Dorsolateral prefrontal cortex (tissue), 120 donors: ENCODE measurements at regions of chr11 and their contacts with region 1.

Region 1: GRCh38 chr11:10550503-10551289 is 9.7 kb upstream of the RNF141 start:
- DNase-seq: no peak
- H3K4me3 ChIP-seq: no peak overlapping the region
- H3K27ac ChIP-seq: no peak overlapping the region
- H3K27me3 ChIP-seq: no peaks in the 10 kb centered on the region
- CTCF ChIP-seq: no peak

Region 2: DNA sequence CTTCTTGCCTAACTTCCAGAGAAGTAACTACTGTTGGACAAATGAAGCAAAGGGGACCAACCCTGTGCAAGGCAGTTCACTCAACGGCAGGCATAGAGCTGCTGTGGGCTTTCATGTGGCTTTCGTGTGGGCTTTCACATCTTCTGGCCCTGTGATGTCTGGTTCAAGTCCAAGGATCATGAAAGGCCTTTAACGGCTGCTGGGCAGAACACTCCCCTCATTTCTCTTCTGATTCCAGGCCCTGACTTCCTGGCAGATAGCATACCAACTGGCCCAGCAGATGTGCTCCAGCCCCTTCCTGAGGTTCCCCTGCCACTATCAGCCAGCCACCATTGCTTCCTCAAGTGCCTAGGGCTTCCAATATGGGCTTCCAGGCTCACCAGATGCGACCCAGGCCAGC is 171.6 kb after region 1 on chr11:
- intact Hi-C with region 1: loop called in 1 of 2 experiments (anchors 5 kb)
- DNase-seq: no peak
- H3K4me3 ChIP-seq: no peak overlapping the region
- H3K27ac ChIP-seq: no peak overlapping the region
- H3K27me3 ChIP-seq: no peaks in the 10 kb centered on the region
- CTCF ChIP-seq: no peak

Region 3: DNA sequence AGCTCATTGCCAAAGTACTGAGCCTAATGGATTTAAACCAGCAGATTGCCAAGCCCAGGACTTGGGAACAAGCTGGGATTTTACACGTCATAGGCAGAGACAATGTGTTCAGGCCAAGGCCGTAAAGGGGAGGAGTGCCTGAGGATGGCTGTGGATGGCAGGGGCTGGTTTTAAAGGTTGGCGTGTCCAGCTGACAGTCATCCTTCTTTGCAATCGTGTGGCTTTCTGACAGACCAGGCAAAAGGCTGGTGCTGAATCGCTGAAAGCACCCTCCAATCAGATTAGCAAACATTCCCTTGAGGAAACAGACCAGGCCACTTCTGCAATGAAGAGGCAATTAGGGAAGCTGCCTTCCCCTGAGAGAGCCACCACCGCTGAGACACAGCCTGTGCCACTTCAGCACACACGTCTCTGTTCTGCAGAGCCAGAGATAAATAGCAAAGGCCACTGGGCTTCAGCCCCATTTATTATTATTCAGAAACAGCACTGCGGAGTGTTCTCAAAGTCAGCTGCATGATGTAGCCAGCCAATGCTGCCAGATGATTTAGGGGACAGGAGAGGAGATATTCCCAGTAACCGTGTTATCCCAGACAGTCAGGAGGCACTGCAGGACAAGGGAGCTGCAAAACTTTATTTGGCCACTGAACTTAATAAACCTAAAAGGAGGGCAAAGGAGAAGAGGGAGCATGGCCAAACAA is 856.5 kb after region 1 on chr11:
- intact Hi-C with region 1: no loop called
- DNase-seq: peak in 1 of 10 donors; percentile 44
- H3K4me3 ChIP-seq: no peak overlapping the region
- H3K27ac ChIP-seq: peak overlapping the region in 46 of 59 donors; percentile 0 to 77 (median 49)
- H3K27me3 ChIP-seq: no peaks in the 10 kb centered on the region
- CTCF ChIP-seq: peak in 9 of 56 donors; percentile 9 to 31 (median 13)